ENCODE measurements at regions of chr11 and their contacts with region 1.

Region 1: GRCh38 chr11:84780689-84781293 is 846.4 kb downstream of the DLG2 start:
- DNase-seq: no peak
- H3K4me3 ChIP-seq: no peak overlapping the region
- H3K27ac ChIP-seq: no peak overlapping the region
- H3K4me1 ChIP-seq: no peaks in the 10 kb centered on the region
- H3K27me3 ChIP-seq: no peaks in the 10 kb centered on the region
- CTCF ChIP-seq: no peak

Region 2: GRCh38 chr11:84930863-84931262 is 150.1 kb after region 1 on chr11:
- intact Hi-C with region 1: no loop called
- DNase-seq: no peak
- H3K4me3 ChIP-seq: no peak overlapping the region
- H3K27ac ChIP-seq: no peak overlapping the region
- H3K4me1 ChIP-seq: no peaks in the 10 kb centered on the region
- H3K27me3 ChIP-seq: no peaks in the 10 kb centered on the region
- CTCF ChIP-seq: no peak

Region 3: DNA sequence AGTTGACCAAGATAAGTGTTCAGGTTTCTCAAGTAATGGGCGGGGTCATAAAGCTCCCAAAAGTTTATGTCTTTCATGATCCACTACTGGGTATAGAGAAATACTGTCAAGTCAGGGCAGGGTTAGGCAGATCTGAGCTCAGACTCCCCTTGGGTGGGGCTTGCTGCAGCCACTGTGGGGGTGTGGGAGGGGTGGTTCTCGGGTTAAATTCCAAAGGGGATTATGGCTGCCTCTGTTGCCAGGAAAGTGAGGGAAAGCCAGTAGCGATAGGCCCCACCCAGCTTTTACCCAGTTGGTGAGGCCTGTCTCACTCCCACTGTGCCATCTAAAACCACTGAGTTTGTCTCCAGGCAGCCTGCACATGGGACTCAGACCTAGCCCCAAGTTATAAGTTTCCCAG is 808.6 kb after region 1 on chr11:
- intact Hi-C with region 1: loop called (anchors 10 kb)
- DNase-seq: no peak
- H3K4me3 ChIP-seq: no peak overlapping the region
- H3K27ac ChIP-seq: no peak overlapping the region
- H3K4me1 ChIP-seq: no peaks in the 10 kb centered on the region
- H3K27me3 ChIP-seq: no peaks in the 10 kb centered on the region
- CTCF ChIP-seq: no peak

Measured in colonic mucosa (tissue), 4 donors.